ENCODE measurements at regions of chr10 and their contacts with region 1.

Region 1: GRCh38 chr10:124688889-124689670 is 55.1 kb downstream of the FAM53B start:
- DNase-seq: peak; percentile 73
- H3K4me3 Mint-ChIP-seq: peak overlapping the region; percentile 48
- H3K27ac Mint-ChIP-seq: peak overlapping the region; percentile 86
- H3K4me1 Mint-ChIP-seq: peaks cover 76% of the 10 kb centered on the region
- H3K27me3 Mint-ChIP-seq: no peaks in the 10 kb centered on the region

Region 2: GRCh38 chr10:124211921-124212320 is 477.2 kb before region 1 on chr10:
- intact Hi-C with region 1: no loop called
- DNase-seq: no peak
- H3K4me3 Mint-ChIP-seq: no peak overlapping the region
- H3K27ac Mint-ChIP-seq: no peak overlapping the region
- H3K4me1 Mint-ChIP-seq: no peaks in the 10 kb centered on the region
- H3K27me3 Mint-ChIP-seq: peaks cover 11% of the 10 kb centered on the region

Region 3: GRCh38 chr10:124614003-124614659 is 74.9 kb before region 1 on chr10:
- intact Hi-C with region 1: loop called (anchors 1 kb)
- DNase-seq: peak; percentile 41
- H3K4me3 Mint-ChIP-seq: no peak overlapping the region
- H3K27ac Mint-ChIP-seq: no peak overlapping the region
- H3K4me1 Mint-ChIP-seq: peaks cover 40% of the 10 kb centered on the region
- H3K27me3 Mint-ChIP-seq: peaks cover 2% of the 10 kb centered on the region

Region 4: GRCh38 chr10:124647421-124648130 is 41.5 kb before region 1 on chr10:
- intact Hi-C with region 1: loop called (anchors 1 kb)
- DNase-seq: peak; percentile 67
- H3K4me3 Mint-ChIP-seq: peak overlapping the region; percentile 45
- H3K27ac Mint-ChIP-seq: peak overlapping the region; percentile 85
- H3K4me1 Mint-ChIP-seq: peaks cover 78% of the 10 kb centered on the region
- H3K27me3 Mint-ChIP-seq: no peaks in the 10 kb centered on the region

Region 5: DNA sequence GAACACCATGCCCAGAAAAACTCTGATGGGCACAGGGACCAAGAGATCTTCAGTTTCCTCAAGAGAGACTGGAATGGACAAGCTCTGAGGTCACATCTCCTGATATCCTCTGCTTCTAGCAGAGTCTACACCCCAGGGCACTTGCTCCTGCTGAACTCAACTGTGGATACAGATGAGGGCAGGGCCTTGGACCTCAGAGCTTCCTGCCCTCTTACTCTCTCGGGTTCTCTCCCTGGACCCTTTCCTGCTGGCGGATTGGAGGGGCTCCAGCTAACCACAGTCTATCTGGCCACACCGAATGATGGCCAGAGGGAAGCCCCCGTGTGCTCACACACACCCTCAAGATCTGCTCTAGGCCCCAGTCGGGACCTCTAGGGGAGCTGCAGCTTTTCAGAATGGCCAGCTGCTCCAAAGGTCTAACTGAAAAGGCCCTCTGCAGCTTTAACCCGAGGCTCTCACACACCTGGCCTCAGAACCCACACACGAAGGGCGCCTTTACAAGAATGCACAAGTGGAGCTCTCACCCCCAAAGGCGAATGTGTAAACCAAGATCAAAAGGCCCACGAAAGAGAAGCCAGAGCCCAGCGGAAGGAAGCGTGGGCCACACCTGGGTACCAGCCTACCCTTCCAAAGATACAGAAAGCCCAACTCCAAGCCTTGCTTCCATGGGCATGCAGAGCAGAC is 10.4 kb before region 1 on chr10:
- intact Hi-C with region 1: loop called (anchors 1 kb)
- DNase-seq: peak; percentile 23
- H3K4me3 Mint-ChIP-seq: peak overlapping the region; percentile 55
- H3K27ac Mint-ChIP-seq: peak overlapping the region; percentile 73
- H3K4me1 Mint-ChIP-seq: peaks cover 35% of the 10 kb centered on the region
- H3K27me3 Mint-ChIP-seq: no peaks in the 10 kb centered on the region

Region 6: GRCh38 chr10:124717911-124718741 is 29.0 kb after region 1 on chr10:
- intact Hi-C with region 1: loop called (anchors 1 kb)
- DNase-seq: peak; percentile 64
- H3K4me3 Mint-ChIP-seq: peak overlapping the region; percentile 73
- H3K27ac Mint-ChIP-seq: peak overlapping the region; percentile 79
- H3K4me1 Mint-ChIP-seq: peaks cover 88% of the 10 kb centered on the region
- H3K27me3 Mint-ChIP-seq: peaks cover 6% of the 10 kb centered on the region

Region 7: GRCh38 chr10:124791378-124792348 is 102.6 kb after region 1 on chr10 and contains the start of gene EEF1AKMT2:
- intact Hi-C with region 1: loop called (anchors 5 kb)
- DNase-seq: peak; percentile 78
- H3K4me3 Mint-ChIP-seq: peak within 1 kb of the TSS; percentile 94
- H3K27ac Mint-ChIP-seq: peak within 1 kb of the TSS; percentile 92
- H3K4me1 Mint-ChIP-seq: peaks cover 24% of the 10 kb centered on the region
- H3K27me3 Mint-ChIP-seq: peaks cover 3% of the 10 kb centered on the region
- total RNA-seq, gene EEF1AKMT2: 20.5 and 21.3 TPM in 2 replicates

Region 8: GRCh38 chr10:126179637-126180036 is 1490.6 kb after region 1 on chr10:
- intact Hi-C with region 1: no loop called
- DNase-seq: no peak
- H3K4me3 Mint-ChIP-seq: no peak overlapping the region
- H3K27ac Mint-ChIP-seq: no peak overlapping the region
- H3K4me1 Mint-ChIP-seq: no peaks in the 10 kb centered on the region
- H3K27me3 Mint-ChIP-seq: no peaks in the 10 kb centered on the region

Measured in activated T-helper 1 cell treated with anti-CD3 and anti-CD28 coated beads, Interleukin-12 subunit alpha, Interleukin-12 subunit beta, Interleukin-2, Interleukin-4 antibody, amounts not matched to agents 30 ng/mL and 10 ng/mL and 1 ng/mL, durations not matched to agents 14 hours and 24 hours and 36 hours (primary cell).